Endothelial cell of umbilical vein (primary cell): ENCODE measurements at regions of chr17 and their contacts with region 1.

Region 1: DNA sequence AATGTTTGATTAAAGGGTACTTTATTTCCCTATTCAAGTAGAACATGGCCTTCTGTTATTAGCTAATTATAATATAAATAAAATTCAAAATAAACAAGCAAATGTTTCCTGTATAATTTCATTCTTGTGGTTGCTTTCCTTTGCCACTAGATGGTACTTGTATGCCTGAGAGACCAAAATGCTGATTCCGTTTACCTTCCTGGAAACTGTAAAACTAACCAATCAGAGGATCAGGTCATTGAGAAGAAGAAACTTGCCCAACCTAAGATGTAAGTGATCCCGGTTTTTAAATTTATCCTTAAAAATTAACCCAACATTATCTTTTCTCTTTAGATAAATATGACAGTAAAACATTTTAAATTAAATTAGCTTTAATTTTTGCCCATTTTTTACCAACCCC is 8.1 kb upstream of the ABCA5 start:
- DNase-seq: peak; percentile 46
- H3K4me3 ChIP-seq: no peak overlapping the region
- H3K27ac ChIP-seq: no peak overlapping the region
- H3K4me1 ChIP-seq: no peaks in the 10 kb centered on the region
- H3K27me3 ChIP-seq: no peaks in the 10 kb centered on the region
- CTCF ChIP-seq: peak in 1 of 2 donors; percentile 30
- POLR2A ChIP-seq: no peak

Region 2: DNA sequence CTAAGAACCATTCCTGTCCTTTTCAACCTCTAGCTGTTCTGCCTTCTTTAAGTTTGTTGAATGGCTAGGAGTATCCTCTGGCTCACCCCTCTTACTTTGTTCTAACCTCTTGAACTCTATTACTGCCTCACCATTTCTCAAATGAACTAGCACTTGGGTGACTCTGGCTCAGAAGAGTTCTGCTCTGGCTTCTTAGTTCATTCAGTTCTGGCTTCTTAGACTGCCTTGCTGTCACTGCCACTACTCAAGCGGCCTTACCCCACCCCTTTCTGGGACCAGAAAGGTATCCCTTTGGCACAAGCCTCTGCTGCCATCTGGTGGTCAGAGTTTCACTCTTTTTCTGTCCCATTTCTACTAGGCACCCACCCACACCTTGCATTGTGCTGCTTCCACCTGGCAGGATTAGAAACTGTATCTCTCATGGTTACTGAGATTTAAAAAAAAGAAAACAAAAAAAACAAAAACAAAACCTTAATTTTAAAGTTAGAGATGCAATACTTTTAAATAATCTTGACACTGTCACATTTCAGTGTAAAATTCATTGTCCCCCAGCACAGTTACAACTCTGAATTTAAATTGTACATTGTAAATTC is 99.6 kb before region 1 on chr17:
- CTCF ChIA-PET with region 1: no interaction called
- POLR2A ChIA-PET with region 1: no interaction called
- dilution Hi-C with region 1: no loop called
- intact Hi-C with region 1: no loop called
- DNase-seq: peak; percentile 90
- H3K4me3 ChIP-seq: no peak overlapping the region
- H3K27ac ChIP-seq: peak overlapping the region; percentile 24
- H3K4me1 ChIP-seq: peaks cover 4% of the 10 kb centered on the region
- H3K27me3 ChIP-seq: no peaks in the 10 kb centered on the region
- CTCF ChIP-seq: peak; percentile 67 to 68
- POLR2A ChIP-seq: no peak

Region 3: DNA sequence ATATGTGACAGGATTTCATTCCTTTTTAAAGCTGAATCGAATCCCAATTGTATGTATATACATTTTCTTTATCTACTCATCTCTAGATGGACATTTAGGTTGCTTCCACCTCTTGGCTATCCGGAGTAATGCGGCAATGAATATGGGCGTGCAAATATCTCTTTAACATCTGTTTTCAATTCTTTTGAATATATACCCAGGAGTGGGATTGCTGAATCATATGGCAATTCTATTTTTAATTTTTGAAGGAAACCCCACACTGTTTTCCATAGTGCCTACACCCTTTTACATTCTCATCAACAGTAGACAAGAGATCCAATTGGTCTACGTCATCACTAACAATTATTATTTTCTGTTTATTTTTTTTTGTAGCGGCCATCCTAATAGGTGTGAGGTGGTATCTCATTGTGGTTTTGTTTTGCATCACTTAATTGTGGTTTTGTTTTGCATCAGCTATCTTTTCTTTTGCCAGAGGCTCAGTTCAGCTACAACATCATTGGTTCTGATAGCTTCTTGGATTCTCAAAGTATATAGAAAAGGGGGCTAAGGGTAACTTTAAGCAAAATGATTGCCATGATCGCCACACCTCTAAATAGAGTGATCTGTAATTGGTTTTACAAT is 53.9 kb after region 1 on chr17:
- CTCF ChIA-PET with region 1: interaction called, 32 read pairs
- POLR2A ChIA-PET with region 1: no interaction called
- dilution Hi-C with region 1: no loop called
- intact Hi-C with region 1: loop called (anchors 2 kb)
- DNase-seq: no peak
- H3K4me3 ChIP-seq: no peak overlapping the region
- H3K27ac ChIP-seq: no peak overlapping the region
- H3K4me1 ChIP-seq: no peaks in the 10 kb centered on the region
- H3K27me3 ChIP-seq: no peaks in the 10 kb centered on the region
- CTCF ChIP-seq: no peak
- POLR2A ChIP-seq: no peak

Region 4: GRCh38 chr17:69434164-69434579 is 99.1 kb after region 1 on chr17:
- CTCF ChIA-PET with region 1: interaction called, 11 read pairs
- POLR2A ChIA-PET with region 1: no interaction called
- dilution Hi-C with region 1: no loop called
- intact Hi-C with region 1: no loop called
- DNase-seq: peak; percentile 83
- H3K4me3 ChIP-seq: no peak overlapping the region
- H3K27ac ChIP-seq: no peak overlapping the region
- H3K4me1 ChIP-seq: peaks cover 27% of the 10 kb centered on the region
- H3K27me3 ChIP-seq: no peaks in the 10 kb centered on the region
- CTCF ChIP-seq: no peak
- POLR2A ChIP-seq: no peak

Region 5: DNA sequence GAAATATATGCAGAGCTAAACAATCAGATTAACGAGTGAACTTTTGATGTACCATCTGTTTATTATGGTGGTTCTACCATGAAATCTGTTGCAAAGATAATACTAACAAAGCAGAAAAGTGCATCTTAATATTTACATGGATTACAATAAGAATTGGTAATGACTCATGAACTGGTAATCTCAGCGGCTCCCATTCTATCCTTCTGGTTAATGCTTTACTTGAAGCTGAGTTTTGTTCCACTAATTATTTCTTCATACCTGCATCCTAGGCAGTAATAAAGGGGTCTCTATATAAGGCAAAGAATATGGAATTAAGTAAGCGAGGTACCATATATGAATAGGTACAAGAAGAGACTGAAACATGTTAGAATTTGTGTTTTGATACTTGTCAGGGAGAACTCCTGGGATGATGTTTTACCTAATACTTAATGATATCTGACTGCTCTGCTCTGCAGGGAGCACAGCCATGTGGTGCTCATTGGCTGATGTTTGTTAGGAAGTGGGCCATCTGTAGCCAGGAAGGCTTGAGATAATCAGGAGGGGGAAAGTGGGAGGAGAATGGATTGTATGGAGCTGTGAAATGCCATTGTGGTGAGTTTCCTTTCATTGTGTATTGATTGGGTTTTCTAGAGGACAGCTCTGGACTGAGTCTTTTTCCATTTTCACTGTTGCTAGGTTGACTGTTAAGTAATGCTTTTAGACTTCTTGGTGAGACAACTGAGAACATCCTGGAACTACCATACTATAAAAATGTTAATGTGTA is 132.0 kb after region 1 on chr17:
- CTCF ChIA-PET with region 1: interaction called, 13 read pairs
- POLR2A ChIA-PET with region 1: no interaction called
- dilution Hi-C with region 1: no loop called
- intact Hi-C with region 1: no loop called
- DNase-seq: peak; percentile 92
- H3K4me3 ChIP-seq: no peak overlapping the region
- H3K27ac ChIP-seq: peak overlapping the region; percentile 65
- H3K4me1 ChIP-seq: peaks cover 20% of the 10 kb centered on the region
- H3K27me3 ChIP-seq: no peaks in the 10 kb centered on the region
- CTCF ChIP-seq: no peak
- POLR2A ChIP-seq: no peak

Region 6: DNA sequence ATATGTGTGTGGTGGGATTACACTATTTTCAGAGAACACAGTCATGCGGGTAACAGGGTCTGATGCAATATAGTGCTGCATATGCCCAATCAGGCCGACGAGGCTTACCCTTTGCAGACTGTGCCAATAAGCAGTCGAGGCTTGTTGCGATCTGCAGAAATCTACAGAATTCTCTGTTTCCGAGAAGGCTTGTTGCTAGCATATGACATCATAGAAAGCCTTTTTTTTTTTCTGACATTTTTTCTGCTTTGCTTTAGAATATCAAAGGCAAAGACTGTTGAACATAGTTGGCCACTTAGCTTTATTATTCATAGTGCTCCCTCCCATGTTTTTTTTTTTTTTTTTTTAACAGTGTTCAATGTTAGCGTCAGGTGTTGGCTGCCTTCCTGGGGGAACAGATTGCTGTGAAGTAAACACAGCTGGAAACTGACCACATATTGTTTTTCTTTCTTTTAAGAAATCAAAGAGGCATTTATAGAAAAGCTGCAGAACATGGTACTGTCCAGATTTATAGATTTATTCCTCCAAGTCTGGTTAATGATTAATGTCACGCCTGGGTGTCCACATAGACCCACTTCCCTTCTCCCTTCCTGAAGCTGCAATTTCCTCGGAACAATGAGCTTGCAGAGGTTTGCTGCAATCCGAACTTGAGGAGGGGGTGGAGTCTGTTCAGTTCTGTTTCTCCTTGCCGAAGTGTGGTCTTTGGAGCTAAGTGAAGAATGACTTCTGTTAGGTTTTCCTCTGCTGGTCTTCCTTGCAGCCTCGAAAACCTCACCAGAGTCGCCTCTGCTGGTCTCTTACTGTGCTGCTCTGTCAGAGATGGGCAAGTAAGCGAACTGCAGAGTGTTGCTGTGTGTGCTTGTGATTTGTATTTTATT is 166.8 kb after region 1 on chr17:
- CTCF ChIA-PET with region 1: interaction called, 11 read pairs
- POLR2A ChIA-PET with region 1: no interaction called
- dilution Hi-C with region 1: no loop called
- intact Hi-C with region 1: no loop called
- DNase-seq: peak; percentile 59
- H3K4me3 ChIP-seq: peak overlapping the region in 1 of 3 experiments; percentile 46
- H3K27ac ChIP-seq: peak overlapping the region; percentile 21
- H3K4me1 ChIP-seq: peaks cover 12% of the 10 kb centered on the region
- H3K27me3 ChIP-seq: no peaks in the 10 kb centered on the region
- CTCF ChIP-seq: no peak
- POLR2A ChIP-seq: no peak